ENCODE measurements at regions of chr20 and their contacts with region 1.

Region 1: DNA sequence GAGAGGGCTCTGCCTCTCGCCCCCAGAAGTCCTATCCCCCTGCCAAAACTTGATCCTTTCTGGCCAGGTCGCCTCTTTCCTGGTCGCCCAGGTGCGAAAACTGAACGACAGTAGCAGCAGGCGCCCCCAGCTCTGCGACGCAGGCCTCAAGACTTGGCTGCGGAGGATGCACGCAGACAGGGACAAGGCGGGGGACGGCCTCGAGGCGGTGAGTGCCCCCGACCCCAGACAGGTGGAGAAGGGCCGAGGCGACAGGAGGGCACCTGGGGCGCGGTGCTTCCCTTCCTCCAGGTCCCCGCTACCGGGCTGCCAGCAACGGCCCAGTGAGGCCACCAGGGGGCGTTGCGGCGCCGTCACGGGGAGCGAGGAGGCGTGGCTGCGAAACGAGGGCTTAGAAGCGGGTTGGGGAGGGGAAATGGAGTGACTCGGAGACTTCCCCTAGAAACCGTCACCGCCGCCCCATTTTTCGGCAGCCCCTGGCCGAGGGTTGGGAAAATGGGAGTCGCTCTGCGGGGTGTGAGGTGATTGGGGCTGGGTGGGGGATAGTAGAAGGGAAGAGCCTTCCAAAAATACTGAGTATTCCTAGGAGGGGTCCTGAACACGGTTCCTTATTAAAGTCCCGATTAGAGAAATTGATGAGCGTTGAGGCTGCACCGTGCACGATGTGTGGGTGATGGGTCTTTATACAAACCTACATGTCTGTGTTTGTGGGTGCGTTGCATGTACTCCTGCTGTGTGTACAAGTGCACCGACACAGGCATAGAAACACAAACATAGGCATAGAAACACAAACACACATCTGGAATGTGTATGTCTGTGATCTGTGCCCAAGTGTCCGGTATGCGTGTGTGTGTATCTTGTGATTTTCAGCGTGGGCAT is 44.6 kb downstream of the ARHGAP40 start:
- DNase-seq: peak; percentile 28 to 75 (median 48)
- H3K4me3 ChIP-seq: no peak overlapping the region
- H3K27ac ChIP-seq: no peak overlapping the region
- H3K4me1 ChIP-seq: no peaks in the 10 kb centered on the region
- H3K27me3 ChIP-seq: no peaks in the 10 kb centered on the region
- CTCF ChIP-seq: peak; percentile 21 to 68 (median 39)
- EP300 ChIP-seq: no peak
- POLR2A ChIP-seq: no peak

Region 2: GRCh38 chr20:38255393-38255792 is 390.8 kb before region 1 on chr20:
- intact Hi-C with region 1: no loop called
- DNase-seq: peak in 1 of 5 donors; percentile 53
- H3K4me3 ChIP-seq: no peak overlapping the region
- H3K27ac ChIP-seq: peak overlapping the region; percentile 74 to 75
- H3K4me1 ChIP-seq: peaks cover 10% of the 10 kb centered on the region
- H3K27me3 ChIP-seq: no peaks in the 10 kb centered on the region
- CTCF ChIP-seq: no peak
- EP300 ChIP-seq: no peak
- POLR2A ChIP-seq: no peak

Region 3: GRCh38 chr20:38730989-38731737 is 84.9 kb after region 1 on chr20:
- intact Hi-C with region 1: loop called in 1 of 4 experiments (anchors 10 kb)
- DNase-seq: peak; percentile 18 to 61 (median 39)
- H3K4me3 ChIP-seq: no peak overlapping the region
- H3K27ac ChIP-seq: no peak overlapping the region
- H3K4me1 ChIP-seq: peaks cover 1% of the 10 kb centered on the region
- H3K27me3 ChIP-seq: no peaks in the 10 kb centered on the region
- CTCF ChIP-seq: peak; percentile 29 to 40 (median 38)
- EP300 ChIP-seq: no peak
- POLR2A ChIP-seq: no peak

Region 4: GRCh38 chr20:38893565-38894090 is 247.4 kb after region 1 on chr20:
- intact Hi-C with region 1: loop called in 2 of 4 experiments (anchors 5 to 10 kb)
- DNase-seq: peak; percentile 32 to 72 (median 50)
- H3K4me3 ChIP-seq: no peak overlapping the region
- H3K27ac ChIP-seq: no peak overlapping the region
- H3K4me1 ChIP-seq: no peaks in the 10 kb centered on the region
- H3K27me3 ChIP-seq: no peaks in the 10 kb centered on the region
- CTCF ChIP-seq: peak in 1 of 3 donors; percentile 47
- EP300 ChIP-seq: no peak
- POLR2A ChIP-seq: no peak

Region 5: DNA sequence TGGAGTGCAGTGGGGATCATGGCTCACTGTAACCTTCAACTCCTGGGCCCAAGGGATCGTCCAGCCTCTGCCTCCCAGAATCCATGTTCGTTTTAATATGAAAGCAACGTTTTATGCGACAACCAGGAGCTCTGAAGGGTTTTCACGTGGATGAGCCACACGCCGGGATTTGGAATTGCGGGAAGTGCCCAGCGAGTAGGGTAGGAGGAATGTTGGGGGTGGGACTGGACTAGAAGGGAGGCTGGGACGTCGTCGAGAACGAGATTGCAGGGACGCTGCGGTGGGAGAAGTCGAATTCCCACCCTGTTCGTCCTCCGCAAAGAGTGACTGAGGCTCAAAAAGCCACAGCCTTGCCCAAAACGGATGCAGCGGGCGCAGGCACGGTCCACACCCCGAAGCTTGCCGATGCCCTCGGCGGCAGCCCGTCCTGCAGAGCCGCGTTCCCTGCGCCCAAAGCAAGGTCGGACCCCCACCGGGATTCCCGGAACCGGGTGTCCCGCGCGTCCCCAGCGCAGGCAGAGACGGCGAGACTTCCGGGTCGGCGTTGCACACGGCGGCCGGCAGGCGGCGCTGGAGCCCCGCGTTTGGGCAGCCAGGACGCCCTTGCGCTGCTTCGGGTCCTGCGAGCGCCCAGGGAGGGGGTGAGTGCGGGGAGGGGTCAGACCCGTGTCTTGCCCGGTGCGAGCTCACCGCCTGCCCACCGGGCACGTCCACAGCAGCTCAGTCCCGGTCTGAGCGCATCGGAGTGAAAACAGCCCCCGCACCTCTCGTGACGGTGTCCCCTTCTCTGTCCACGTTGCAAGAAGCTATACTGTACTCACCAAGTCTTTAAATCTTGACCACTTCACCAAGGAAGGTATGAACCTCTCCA is 403.7 kb after region 1 on chr20:
- intact Hi-C with region 1: loop called in 1 of 4 experiments (anchors 5 kb)
- DNase-seq: peak; percentile 63 to 84 (median 73)
- H3K4me3 ChIP-seq: peak overlapping the region; percentile 71
- H3K27ac ChIP-seq: no peak overlapping the region
- H3K4me1 ChIP-seq: no peaks in the 10 kb centered on the region
- H3K27me3 ChIP-seq: no peaks in the 10 kb centered on the region
- CTCF ChIP-seq: peak; percentile 86 to 92 (median 90)
- EP300 ChIP-seq: no peak
- POLR2A ChIP-seq: no peak

Measured in ovary (tissue), 10 donors.